ENCODE measurements at regions of chr20 and their contacts with region 1.

Region 1: DNA sequence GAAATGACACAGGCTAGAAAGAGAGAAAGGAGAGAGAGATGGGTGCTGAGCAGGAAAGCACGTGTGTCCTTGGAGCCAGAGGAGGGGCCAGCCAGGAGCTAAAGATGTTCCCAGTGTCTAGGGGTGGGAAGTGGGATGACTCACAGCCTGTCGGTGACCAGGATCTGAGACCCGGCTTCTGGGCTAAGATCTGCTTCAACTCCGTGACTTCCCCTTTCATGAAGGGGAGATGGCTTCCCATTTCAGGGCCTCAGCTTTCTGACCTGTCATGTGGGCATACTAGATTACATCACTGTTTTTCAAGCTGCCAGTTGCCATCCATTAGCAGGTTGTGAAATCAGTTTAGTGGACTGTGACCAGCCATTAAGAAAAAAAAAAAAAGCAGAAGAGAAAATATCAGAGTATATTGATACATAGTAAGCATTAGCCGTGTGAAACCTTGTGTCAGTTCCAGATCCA is 5.4 kb downstream of the TGM3 start:
- DNase-seq: peak; percentile 52
- ATAC-seq: peak; percentile 94
- H3K4me3 Mint-ChIP-seq: peak overlapping the region; percentile 8
- H3K27ac Mint-ChIP-seq: peak overlapping the region; percentile 87
- H3K4me1 Mint-ChIP-seq: peaks cover 33% of the 10 kb centered on the region
- H3K27me3 Mint-ChIP-seq: no peaks in the 10 kb centered on the region
- CTCF ChIP-seq: no peak

Region 2: DNA sequence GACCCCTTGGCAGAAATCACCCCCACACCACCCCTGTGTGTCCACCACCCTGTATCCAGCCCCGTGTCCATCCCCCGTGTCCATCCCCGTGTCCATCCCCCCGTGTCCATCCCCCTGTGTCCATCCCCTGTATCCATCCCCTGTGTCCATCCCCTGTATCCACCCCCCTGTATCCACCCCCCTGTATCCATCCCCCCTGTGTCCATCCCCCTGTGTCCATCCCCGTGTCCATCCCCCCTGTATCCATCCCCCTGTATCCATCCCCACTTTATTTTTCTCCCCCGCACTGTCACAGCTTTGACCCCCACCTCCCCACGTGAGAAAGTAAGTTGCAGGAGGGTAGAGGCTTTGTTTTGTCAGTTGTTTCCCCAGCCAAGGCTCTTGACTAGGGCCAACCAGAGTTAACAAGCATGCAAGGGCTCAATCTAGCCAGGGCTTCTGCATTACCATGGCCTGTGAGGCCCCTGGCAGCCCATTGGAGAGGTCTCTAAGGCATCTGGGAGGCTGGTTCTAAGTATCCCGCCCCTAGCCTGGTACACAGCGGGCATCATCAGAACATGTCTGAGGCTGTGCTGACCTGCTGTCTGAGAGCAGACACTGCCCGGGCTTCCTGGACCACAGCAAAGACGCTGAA is 424.1 kb before region 1 on chr20:
- CTCF ChIA-PET with region 1: no interaction called
- POLR2A ChIA-PET with region 1: no interaction called
- intact Hi-C with region 1: loop called (anchors 10 kb)
- DNase-seq: no peak
- ATAC-seq: no peak
- H3K4me3 Mint-ChIP-seq: no peak overlapping the region
- H3K27ac Mint-ChIP-seq: peak overlapping the region; percentile 5
- H3K4me1 Mint-ChIP-seq: peaks cover 28% of the 10 kb centered on the region
- H3K27me3 Mint-ChIP-seq: no peaks in the 10 kb centered on the region
- CTCF ChIP-seq: no peak

Region 3: DNA sequence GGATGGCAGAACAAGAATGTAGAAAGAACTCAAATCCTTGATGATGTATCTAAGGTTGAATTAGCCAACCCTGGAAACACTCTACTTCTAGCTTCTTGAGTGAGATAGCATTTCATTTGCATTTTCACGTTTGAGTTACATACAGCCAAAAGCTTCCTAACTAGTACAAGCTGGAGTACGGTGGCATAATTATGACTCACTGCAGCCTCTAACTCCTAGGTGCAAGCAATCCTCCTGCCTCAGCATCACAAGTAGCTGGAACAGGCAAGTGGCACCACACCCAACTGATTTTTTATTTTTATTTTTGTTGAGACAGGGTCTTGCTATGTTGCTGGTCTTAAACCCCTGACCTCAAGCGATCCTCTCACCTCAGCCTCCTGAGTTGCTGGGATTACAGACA is 236.1 kb before region 1 on chr20:
- CTCF ChIA-PET with region 1: no interaction called
- POLR2A ChIA-PET with region 1: no interaction called
- intact Hi-C with region 1: no loop called
- DNase-seq: no peak
- ATAC-seq: no peak
- H3K4me3 Mint-ChIP-seq: no peak overlapping the region
- H3K27ac Mint-ChIP-seq: no peak overlapping the region
- H3K4me1 Mint-ChIP-seq: no peaks in the 10 kb centered on the region
- H3K27me3 Mint-ChIP-seq: peaks cover 49% of the 10 kb centered on the region
- CTCF ChIP-seq: no peak

Region 4: GRCh38 chr20:2217857-2218539 is 83.2 kb before region 1 on chr20:
- CTCF ChIA-PET with region 1: no interaction called
- POLR2A ChIA-PET with region 1: interaction called, 4 read pairs
- intact Hi-C with region 1: loop called (anchors 1 kb)
- DNase-seq: peak; percentile 21
- ATAC-seq: peak; percentile 92
- H3K4me3 Mint-ChIP-seq: peak overlapping the region; percentile 75
- H3K27ac Mint-ChIP-seq: peak overlapping the region; percentile 97
- H3K4me1 Mint-ChIP-seq: peaks cover 33% of the 10 kb centered on the region
- H3K27me3 Mint-ChIP-seq: no peaks in the 10 kb centered on the region
- CTCF ChIP-seq: no peak

Region 5: DNA sequence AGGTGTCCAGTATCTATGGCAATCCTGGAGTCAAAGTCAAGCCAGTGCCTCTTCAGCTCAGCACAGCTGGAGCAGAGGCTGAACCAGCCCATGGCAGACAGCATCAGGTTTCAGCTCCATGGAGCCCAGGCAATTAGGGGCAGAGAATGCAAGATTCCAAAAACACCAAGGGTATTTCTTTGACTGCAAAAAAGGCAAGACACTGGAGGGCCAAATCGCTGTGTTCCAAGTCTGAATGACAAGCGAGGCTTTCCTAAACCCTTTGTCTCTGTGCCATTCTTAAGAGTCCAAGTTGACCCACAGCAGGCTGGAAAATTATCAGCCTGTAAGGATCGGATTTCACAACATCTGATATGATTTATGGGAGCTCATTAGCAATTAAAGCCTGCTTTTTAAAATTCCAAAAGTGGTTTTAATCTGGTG is 55.1 kb before region 1 on chr20:
- CTCF ChIA-PET with region 1: no interaction called
- POLR2A ChIA-PET with region 1: no interaction called
- intact Hi-C with region 1: no loop called
- DNase-seq: no peak
- ATAC-seq: no peak
- H3K4me3 Mint-ChIP-seq: no peak overlapping the region
- H3K27ac Mint-ChIP-seq: no peak overlapping the region
- H3K4me1 Mint-ChIP-seq: no peaks in the 10 kb centered on the region
- H3K27me3 Mint-ChIP-seq: peaks cover 13% of the 10 kb centered on the region
- CTCF ChIP-seq: no peak

Region 6: GRCh38 chr20:2289471-2289872 is 11.7 kb before region 1 on chr20:
- CTCF ChIA-PET with region 1: interaction called, 3 read pairs
- POLR2A ChIA-PET with region 1: interaction called, 5 read pairs
- intact Hi-C with region 1: loop called (anchors 1 kb)
- DNase-seq: no peak
- ATAC-seq: peak; percentile 49
- H3K4me3 Mint-ChIP-seq: peak overlapping the region; percentile 41
- H3K27ac Mint-ChIP-seq: peak overlapping the region; percentile 22
- H3K4me1 Mint-ChIP-seq: peaks cover 22% of the 10 kb centered on the region
- H3K27me3 Mint-ChIP-seq: no peaks in the 10 kb centered on the region
- CTCF ChIP-seq: no peak

Region 7: GRCh38 chr20:2379511-2380229 is 78.5 kb after region 1 on chr20:
- CTCF ChIA-PET with region 1: no interaction called
- POLR2A ChIA-PET with region 1: no interaction called
- intact Hi-C with region 1: no loop called
- DNase-seq: no peak
- ATAC-seq: no peak
- H3K4me3 Mint-ChIP-seq: no peak overlapping the region
- H3K27ac Mint-ChIP-seq: no peak overlapping the region
- H3K4me1 Mint-ChIP-seq: no peaks in the 10 kb centered on the region
- H3K27me3 Mint-ChIP-seq: peaks cover 15% of the 10 kb centered on the region
- CTCF ChIP-seq: no peak

Region 8: DNA sequence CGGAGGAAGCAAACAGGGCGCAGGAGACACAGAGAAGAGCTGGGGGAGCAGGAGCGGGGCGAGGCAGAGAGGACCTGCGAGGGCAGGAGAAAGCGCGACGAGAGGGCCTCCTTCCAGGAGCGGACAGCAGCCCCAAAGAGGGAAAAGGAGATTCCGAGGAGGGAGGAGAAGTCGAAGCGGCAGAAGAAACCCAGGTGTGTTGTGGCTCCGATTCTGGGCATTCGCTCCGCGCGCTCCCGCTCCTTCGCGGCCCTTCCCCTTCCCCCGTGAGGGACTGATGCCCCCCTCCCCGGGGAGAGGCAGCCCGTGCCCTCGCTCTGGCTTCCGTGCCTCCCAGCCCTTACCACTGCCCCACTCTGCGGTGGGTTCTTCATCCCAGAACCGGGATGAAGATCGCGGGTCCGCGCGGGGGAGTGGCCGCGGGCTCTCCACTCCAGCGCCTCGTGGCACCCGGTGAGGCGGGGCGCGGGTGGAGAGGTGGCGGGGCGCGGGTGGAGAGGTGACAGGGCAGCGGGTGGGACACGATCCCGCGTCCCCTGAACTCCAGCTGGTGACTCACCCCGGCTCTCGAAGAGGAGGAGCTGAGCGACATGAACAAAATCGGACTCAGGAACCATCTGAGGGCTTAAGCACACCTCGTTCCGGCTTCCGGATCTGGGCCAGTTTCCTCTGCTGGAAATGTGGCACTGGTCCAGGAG is 257.5 kb after region 1 on chr20:
- CTCF ChIA-PET with region 1: no interaction called
- POLR2A ChIA-PET with region 1: no interaction called
- intact Hi-C with region 1: no loop called
- DNase-seq: no peak
- ATAC-seq: no peak
- H3K4me3 Mint-ChIP-seq: no peak overlapping the region
- H3K27ac Mint-ChIP-seq: no peak overlapping the region
- H3K4me1 Mint-ChIP-seq: no peaks in the 10 kb centered on the region
- H3K27me3 Mint-ChIP-seq: peaks cover 48% of the 10 kb centered on the region
- CTCF ChIP-seq: no peak

Measured in activated B cell treated with CpG ODN at 0.5 μM for 24 hours (primary cell).